ENCODE measurements at regions of chr10 and their contacts with region 1.

Region 1: GRCh38 chr10:124916585-124917427 is 25.1 kb upstream of the ZRANB1 start:
- DNase-seq: peak; percentile 94
- ATAC-seq: peak; percentile 85
- H3K4me3 ChIP-seq: peak overlapping the region; percentile 85
- H3K27ac ChIP-seq: no peak overlapping the region; the same call in 1 of the 2 replicates
- H3K4me1 ChIP-seq: peaks cover 28% of the 10 kb centered on the region
- H3K27me3 ChIP-seq: no peaks in the 10 kb centered on the region
- CTCF ChIP-seq: no peak

Region 2: GRCh38 chr10:124791378-124792348 is 125.1 kb before region 1 on chr10 and contains the start of gene EEF1AKMT2:
- CTCF ChIA-PET with region 1: no interaction called
- POLR2A ChIA-PET with region 1: interaction called, 3 read pairs
- intact Hi-C with region 1: loop called (anchors 5 kb)
- DNase-seq: peak; percentile 79
- ATAC-seq: peak; percentile 96
- H3K4me3 ChIP-seq: peak within 1 kb of the TSS; percentile 97
- H3K27ac ChIP-seq: peak within 1 kb of the TSS; percentile 36; the same call in 1 of the 2 replicates
- H3K4me1 ChIP-seq: peaks cover 6% of the 10 kb centered on the region; the same call in 1 of the 2 replicates
- H3K27me3 ChIP-seq: no peaks in the 10 kb centered on the region
- CTCF ChIP-seq: no peak; the same call in none of the 2 replicates
- total RNA-seq, gene EEF1AKMT2: 18.2 and 19.6 TPM in 2 replicates

Region 3: DNA sequence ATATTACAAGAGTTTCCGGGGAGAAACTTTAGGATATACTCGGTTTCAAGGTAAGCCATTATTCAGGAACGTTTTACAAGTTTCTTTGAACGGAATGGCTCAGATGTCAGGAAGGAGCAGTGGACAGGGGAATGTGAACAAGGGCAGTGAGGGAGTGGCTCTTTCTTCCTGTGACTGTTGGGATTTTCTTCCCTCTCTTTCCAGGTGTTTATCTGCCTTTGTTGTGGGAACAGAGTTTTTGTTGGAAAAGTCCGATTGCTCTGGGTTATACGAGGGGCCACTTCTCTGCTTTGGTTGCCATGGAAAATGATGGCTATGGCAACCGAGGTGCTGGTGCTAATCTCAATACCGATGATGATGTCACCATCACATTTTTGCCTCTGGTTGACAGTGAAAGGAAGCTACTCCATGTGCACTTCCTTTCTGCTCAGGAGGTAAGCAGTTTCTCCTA is 66.5 kb after region 1 on chr10:
- CTCF ChIA-PET with region 1: no interaction called
- POLR2A ChIA-PET with region 1: no interaction called
- intact Hi-C with region 1: loop called (anchors 1 kb)
- DNase-seq: no peak
- ATAC-seq: no peak
- H3K4me3 ChIP-seq: no peak overlapping the region
- H3K27ac ChIP-seq: no peak overlapping the region
- H3K4me1 ChIP-seq: no peaks in the 10 kb centered on the region
- H3K27me3 ChIP-seq: no peaks in the 10 kb centered on the region
- CTCF ChIP-seq: no peak

Measured in PC-3 (cell line).